ENCODE measurements at regions of chr6 and their contacts with region 1.

Region 1: DNA sequence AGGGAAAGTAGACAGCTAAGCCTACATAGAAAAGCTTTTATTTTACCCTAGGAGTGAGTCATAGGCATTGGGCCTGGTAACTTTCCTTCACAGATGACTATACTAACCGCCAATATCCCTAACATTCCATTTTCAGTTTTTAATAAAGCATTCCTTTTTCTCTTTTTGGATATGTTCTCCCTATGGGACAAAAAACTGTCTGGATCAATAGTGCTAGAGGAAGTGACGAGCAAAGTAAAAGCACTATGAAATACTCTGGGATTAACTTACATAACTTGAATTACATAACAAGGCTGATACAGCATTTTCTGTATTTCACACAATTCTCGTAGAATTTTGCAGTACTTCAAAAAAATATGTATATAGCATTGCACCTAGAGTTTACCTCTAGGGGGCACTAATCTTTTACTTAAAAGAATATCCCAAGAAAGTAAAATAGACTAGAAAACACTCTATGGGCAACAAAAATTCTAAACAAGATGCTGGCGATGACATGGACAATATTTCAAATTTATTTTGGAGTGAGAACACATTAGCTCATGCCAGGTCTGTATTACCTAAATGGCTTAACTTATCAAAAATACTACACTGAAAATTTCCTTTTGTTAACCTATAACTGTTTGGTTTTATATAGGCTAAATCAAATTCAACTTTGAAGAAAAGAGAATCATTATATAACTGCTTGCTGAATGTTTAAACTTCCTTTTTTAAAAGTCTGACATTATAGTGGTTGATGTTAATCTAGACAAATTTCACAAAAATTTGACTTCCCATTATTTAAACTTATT is 66.3 kb upstream of the DST start:
- DNase-seq: peak; percentile 75 to 86 (median 83)
- H3K4me3 ChIP-seq: no peak overlapping the region
- H3K27ac ChIP-seq: no peak overlapping the region
- H3K4me1 ChIP-seq: no peaks in the 10 kb centered on the region
- H3K27me3 ChIP-seq: no peaks in the 10 kb centered on the region

Region 2: GRCh38 chr6:56459025-56459810 is 249.8 kb before region 1 on chr6:
- CTCF ChIA-PET with region 1: no interaction called
- POLR2A ChIA-PET with region 1: no interaction called
- DNase-seq: no peak
- H3K4me3 ChIP-seq: no peak overlapping the region
- H3K27ac ChIP-seq: no peak overlapping the region
- H3K4me1 ChIP-seq: no peaks in the 10 kb centered on the region
- H3K27me3 ChIP-seq: no peaks in the 10 kb centered on the region

Region 3: GRCh38 chr6:56744528-56744927 is 35.5 kb after region 1 on chr6:
- CTCF ChIA-PET with region 1: interaction called, 10 read pairs
- POLR2A ChIA-PET with region 1: no interaction called
- DNase-seq: no peak
- H3K4me3 ChIP-seq: no peak overlapping the region
- H3K27ac ChIP-seq: no peak overlapping the region
- H3K4me1 ChIP-seq: peaks cover 0 to 3% (median 1%) of the 10 kb centered on the region in 4 experiments
- H3K27me3 ChIP-seq: no peaks in the 10 kb centered on the region

Region 4: DNA sequence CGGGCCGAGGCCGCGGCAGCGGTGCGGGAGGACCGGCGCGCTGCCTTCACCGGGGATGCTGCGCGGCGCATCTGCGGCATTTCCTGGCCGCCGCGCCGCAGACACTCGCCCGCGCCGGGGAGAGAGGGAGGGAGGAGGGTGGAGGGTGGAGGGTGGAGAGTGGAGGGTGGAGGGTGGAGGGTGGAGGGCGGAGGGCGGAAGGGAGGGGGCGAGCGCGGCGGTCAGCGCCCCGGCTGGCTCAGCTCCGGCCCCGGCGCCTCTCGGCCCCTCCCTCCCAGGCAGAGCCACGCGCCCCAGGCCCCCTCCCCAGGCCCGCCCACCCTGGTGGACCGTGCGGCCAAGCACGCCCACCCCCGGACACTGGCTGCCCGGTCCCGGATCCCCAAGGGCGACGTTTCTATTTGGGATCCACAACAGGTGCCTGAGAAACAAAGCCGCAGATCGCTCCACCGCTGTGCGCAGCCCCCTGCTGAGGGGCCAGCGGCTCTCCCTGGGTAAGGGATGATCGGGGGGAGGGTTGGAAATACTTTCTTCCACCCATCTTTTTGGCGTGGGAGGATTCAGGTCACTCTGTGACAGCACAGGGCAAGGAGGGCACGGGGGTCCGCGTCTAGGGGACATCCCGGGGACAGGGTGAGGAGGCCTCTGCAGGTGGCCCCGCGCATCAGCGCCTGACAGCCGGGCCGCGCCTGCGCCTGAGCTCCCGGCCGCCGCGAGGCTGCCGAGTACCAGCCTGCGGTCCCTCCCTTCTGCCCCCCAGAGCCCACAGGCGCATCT is 134.8 kb after region 1 on chr6:
- CTCF ChIA-PET with region 1: interaction called, 11 read pairs
- POLR2A ChIA-PET with region 1: no interaction called
- DNase-seq: peak; percentile 89 to 96 (median 95)
- H3K4me3 ChIP-seq: peak overlapping the region; percentile 64 to 90 (median 78)
- H3K27ac ChIP-seq: no peak overlapping the region
- H3K4me1 ChIP-seq: peaks cover 0 to 24% (median 7%) of the 10 kb centered on the region in 4 experiments
- H3K27me3 ChIP-seq: no peaks in the 10 kb centered on the region

Measured in common myeloid progenitor, CD34-positive (primary cell).